ENCODE measurements at regions of chr10 and their contacts with region 1.

Region 1: GRCh38 chr10:69237528-69238159 is 17.5 kb downstream of the HKDC1 start:
- DNase-seq: peak; percentile 89 to 97
- ATAC-seq: peak; percentile 93
- H3K4me3 ChIP-seq: no peak overlapping the region
- H3K27ac ChIP-seq: no peak overlapping the region
- H3K4me1 ChIP-seq: no peaks in the 10 kb centered on the region
- H3K27me3 ChIP-seq: no peaks in the 10 kb centered on the region

Region 2: DNA sequence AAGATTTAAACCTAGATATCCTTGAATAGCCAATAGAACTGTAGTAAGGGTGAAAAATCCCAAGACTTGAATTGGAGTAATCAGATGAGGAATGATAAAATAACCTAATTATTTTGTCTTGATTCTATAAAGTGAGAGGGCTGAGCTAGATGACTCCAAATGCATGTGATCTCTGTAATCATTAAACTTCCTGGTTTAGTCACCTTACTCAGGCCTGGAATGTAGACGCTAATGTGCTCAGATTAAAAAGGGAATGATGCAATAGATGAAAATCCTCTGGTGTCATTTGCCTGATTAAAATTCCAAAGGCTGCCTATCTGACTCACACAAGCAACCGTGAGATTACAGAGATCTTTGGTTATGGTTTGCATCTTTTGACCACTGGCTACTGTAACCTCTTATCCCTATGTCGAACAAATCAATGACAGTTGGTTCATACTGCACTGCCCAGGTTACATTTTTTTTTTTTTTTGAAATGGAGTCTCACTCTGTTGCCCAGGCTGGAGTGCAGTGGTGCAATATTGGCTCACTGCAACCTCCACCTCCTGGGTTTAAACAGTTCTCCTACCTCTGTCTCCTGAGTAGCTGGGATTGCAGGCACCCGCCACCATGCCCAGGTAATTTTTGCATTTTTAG is 20.4 kb before region 1 on chr10:
- intact Hi-C with region 1: no loop called
- DNase-seq: no peak
- ATAC-seq: no peak
- H3K4me3 ChIP-seq: no peak overlapping the region
- H3K27ac ChIP-seq: no peak overlapping the region
- H3K4me1 ChIP-seq: no peaks in the 10 kb centered on the region
- H3K27me3 ChIP-seq: no peaks in the 10 kb centered on the region

Region 3: DNA sequence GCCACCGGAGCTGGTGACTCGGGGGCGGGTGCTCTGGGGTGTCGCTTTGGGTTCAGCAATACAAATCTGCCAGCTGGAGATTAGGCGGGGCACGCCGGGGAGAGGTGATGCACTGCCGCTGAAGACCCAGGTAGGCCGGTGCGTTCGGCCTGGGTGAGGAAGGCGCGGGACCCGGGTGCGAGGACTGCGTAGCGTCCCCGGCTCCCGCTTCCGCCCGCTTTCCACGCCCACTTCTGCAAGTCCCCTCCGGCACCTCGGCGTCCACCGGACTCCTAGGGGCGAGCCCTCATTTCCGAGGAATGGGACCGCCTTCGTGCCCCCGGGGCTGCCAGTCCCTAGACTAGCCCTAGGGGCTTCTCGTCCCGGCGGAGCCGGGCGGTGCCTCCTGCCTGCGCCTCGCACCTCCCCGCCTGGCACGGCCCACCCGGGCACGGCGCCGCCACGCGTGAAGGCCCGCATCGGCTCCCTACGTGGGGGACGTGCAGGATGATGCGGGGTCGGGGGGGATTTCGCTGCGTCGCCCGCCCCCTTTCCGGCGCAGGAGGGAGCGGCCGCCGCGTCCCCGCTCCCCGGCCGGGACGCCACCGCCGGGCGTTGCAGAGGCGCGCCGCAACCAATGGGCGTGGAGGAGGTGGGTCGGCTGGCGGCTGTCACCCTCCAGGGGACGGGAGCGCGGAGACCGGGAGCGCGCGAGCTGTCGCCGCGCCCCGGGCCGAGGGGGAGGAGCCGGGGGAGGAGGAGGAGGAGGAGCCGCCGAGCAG is 80.6 kb after region 1 on chr10:
- intact Hi-C with region 1: loop called (anchors 5 kb)
- DNase-seq: peak; percentile 95 to 97
- ATAC-seq: peak; percentile 95
- H3K4me3 ChIP-seq: peak overlapping the region; percentile 57 to 73
- H3K27ac ChIP-seq: peak overlapping the region; percentile 10 to 97
- H3K4me1 ChIP-seq: peaks cover 0 to 8% of the 10 kb centered on the region in 2 donors
- H3K27me3 ChIP-seq: no peaks in the 10 kb centered on the region

Region 4: DNA sequence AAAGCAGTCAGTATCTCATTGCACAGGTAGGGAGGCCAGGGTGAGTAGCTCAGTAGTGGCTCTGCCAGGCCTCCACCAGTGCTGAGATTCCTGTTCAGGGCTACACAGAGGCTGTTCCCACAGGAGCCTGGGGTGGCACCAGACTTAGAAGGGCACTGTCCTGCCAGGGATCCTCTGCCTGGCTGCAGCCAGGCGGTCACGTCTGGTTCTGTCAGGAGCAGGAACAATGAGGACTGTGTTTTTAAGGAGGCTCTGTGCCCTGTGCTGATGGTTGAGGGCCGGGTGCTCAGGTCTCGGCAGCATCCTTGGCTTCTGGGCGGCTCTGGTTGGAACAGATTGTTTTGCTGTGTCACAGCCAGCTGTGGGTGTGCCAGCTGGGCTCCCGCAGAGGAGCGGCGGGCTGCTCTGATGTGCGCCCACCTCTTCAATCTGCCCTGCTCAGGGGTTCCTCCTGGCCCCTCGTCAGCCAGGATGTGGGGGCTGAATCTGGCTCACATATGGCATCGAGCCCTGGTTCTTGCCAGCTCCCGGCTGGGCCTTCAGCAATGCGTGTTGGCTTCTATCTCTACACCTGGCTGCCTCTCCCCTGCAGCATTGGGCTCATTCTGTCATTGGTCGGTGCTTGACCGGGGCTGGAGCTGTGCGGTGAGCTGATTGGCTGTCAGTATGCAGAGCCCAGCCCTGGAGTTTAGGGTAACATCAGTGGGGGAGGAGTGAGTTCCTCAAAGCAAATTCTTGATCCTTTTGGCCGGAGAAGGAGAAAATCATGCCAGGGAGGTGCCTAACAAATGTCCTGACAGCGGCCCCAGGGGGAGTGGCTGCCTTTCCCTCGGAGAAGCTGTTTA is 137.9 kb after region 1 on chr10:
- intact Hi-C with region 1: no loop called
- DNase-seq: peak in 1 of 2 donors; percentile 64
- ATAC-seq: peak; percentile 81
- H3K4me3 ChIP-seq: no peak overlapping the region
- H3K27ac ChIP-seq: peak overlapping the region in 1 of 2 donors; percentile 46
- H3K4me1 ChIP-seq: no peaks in the 10 kb centered on the region
- H3K27me3 ChIP-seq: no peaks in the 10 kb centered on the region

Region 5: DNA sequence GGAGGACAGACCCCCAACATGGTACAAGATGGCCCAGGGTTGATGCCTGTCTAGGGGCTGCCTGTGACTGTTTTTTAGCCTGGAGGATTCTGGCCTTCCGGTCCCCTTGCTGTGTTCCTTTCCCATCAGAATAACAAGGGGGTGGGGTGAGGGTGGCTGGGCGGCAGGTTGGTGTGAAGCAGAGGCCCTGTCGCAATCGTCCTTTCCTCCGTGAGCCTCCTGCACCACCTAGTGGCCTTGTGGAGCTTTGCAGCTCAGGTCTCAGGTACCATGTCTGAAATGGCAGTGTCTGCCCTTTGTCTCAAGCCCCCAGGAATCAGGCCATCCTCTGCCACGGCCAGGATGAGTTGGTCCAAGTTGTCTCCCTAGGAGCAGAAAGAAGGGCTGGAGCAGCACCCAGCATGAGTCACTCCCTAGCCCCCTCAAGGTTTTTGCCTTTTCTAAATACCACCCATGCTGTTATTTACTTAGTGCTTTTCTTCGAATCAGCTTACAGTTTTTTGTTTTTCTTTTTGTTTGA is 154.9 kb after region 1 on chr10:
- intact Hi-C with region 1: loop called (anchors 1 to 2 kb)
- DNase-seq: peak; percentile 89 to 93
- ATAC-seq: peak; percentile 95
- H3K4me3 ChIP-seq: no peak overlapping the region
- H3K27ac ChIP-seq: no peak overlapping the region
- H3K4me1 ChIP-seq: no peaks in the 10 kb centered on the region
- H3K27me3 ChIP-seq: no peaks in the 10 kb centered on the region

Region 6: GRCh38 chr10:69413221-69413865 is 175.7 kb after region 1 on chr10:
- intact Hi-C with region 1: loop called in 1 of 2 experiments (anchors 5 kb)
- DNase-seq: peak; percentile 78 to 86
- ATAC-seq: peak; percentile 67
- H3K4me3 ChIP-seq: no peak overlapping the region
- H3K27ac ChIP-seq: no peak overlapping the region
- H3K4me1 ChIP-seq: no peaks in the 10 kb centered on the region
- H3K27me3 ChIP-seq: no peaks in the 10 kb centered on the region

Region 7: GRCh38 chr10:69506834-69507721 is 269.4 kb after region 1 on chr10:
- intact Hi-C with region 1: loop called (anchors 5 kb)
- DNase-seq: no peak
- ATAC-seq: peak; percentile 48
- H3K4me3 ChIP-seq: no peak overlapping the region
- H3K27ac ChIP-seq: no peak overlapping the region
- H3K4me1 ChIP-seq: no peaks in the 10 kb centered on the region
- H3K27me3 ChIP-seq: no peaks in the 10 kb centered on the region

Region 8: GRCh38 chr10:69541463-69541862 is 303.8 kb after region 1 on chr10:
- intact Hi-C with region 1: no loop called
- DNase-seq: no peak
- ATAC-seq: no peak
- H3K4me3 ChIP-seq: no peak overlapping the region
- H3K27ac ChIP-seq: no peak overlapping the region
- H3K4me1 ChIP-seq: no peaks in the 10 kb centered on the region
- H3K27me3 ChIP-seq: no peaks in the 10 kb centered on the region